Activated B cell treated with CpG ODN at 0.5 μM for 24 hours (primary cell): ENCODE measurements at regions of chr17 and their contacts with region 1.

Region 1: DNA sequence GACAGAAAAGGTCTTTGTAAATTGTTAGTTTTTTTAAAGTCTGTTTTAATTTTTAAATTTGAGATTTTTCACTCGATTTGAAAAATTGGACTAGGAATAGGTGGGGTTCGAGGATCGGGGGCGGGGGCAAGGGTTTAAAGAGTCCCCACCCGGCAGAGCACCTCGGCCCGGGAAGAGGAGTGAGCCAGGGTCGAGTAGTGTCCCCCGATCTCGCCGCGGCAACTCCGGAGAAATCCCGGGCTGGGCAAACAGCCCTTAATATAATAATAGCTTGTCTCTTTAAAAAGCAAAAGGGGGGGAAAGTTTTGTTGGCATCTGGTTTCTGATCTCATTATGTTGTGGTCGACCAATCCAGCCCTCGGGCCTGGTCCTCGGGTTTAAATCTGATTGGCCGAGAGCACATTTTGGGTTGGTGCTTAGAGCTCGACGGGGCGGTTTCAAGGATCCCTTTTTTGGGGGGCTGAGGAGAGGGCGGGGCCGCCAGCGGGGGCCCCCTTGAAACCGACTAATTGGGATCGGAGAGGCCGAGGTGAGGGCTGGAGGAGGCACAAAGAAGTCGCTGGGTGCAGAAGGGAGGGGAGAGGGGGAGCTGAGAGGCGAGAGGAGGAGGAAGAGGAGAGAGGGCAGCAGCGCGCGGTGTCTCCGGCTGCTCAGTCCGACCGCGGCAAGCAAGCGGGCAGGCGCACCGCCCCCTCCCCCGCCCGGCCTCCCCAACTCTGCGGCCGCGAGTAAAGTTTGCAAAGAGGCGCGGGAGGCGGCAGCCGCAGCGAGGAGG is at the start of gene FZD2:
- DNase-seq: peak; percentile 64
- ATAC-seq: peak; percentile 84
- H3K4me3 Mint-ChIP-seq: peak within 1 kb of the TSS; percentile 95
- H3K27ac Mint-ChIP-seq: peak within 1 kb of the TSS; percentile 90
- H3K4me1 Mint-ChIP-seq: peaks cover 26% of the 10 kb centered on the region
- H3K27me3 Mint-ChIP-seq: peaks cover 25% of the 10 kb centered on the region
- CTCF ChIP-seq: no peak
- total RNA-seq, gene FZD2: 0.91 TPM in 2 replicates

Region 2: GRCh38 chr17:44503147-44504029 is 53.6 kb before region 1 on chr17 and contains the start of gene GPATCH8:
- CTCF ChIA-PET with region 1: no interaction called
- POLR2A ChIA-PET with region 1: interaction called, 4 read pairs
- intact Hi-C with region 1: loop called (anchors 2 kb)
- DNase-seq: peak; percentile 96
- ATAC-seq: peak; percentile 90
- H3K4me3 Mint-ChIP-seq: peak within 1 kb of the TSS; percentile 98
- H3K27ac Mint-ChIP-seq: peak within 1 kb of the TSS; percentile 95
- H3K4me1 Mint-ChIP-seq: peaks cover 38% of the 10 kb centered on the region
- H3K27me3 Mint-ChIP-seq: peaks cover 7% of the 10 kb centered on the region
- CTCF ChIP-seq: no peak
- total RNA-seq, gene GPATCH8: 62.2 and 64.5 TPM in 2 replicates

Region 3: DNA sequence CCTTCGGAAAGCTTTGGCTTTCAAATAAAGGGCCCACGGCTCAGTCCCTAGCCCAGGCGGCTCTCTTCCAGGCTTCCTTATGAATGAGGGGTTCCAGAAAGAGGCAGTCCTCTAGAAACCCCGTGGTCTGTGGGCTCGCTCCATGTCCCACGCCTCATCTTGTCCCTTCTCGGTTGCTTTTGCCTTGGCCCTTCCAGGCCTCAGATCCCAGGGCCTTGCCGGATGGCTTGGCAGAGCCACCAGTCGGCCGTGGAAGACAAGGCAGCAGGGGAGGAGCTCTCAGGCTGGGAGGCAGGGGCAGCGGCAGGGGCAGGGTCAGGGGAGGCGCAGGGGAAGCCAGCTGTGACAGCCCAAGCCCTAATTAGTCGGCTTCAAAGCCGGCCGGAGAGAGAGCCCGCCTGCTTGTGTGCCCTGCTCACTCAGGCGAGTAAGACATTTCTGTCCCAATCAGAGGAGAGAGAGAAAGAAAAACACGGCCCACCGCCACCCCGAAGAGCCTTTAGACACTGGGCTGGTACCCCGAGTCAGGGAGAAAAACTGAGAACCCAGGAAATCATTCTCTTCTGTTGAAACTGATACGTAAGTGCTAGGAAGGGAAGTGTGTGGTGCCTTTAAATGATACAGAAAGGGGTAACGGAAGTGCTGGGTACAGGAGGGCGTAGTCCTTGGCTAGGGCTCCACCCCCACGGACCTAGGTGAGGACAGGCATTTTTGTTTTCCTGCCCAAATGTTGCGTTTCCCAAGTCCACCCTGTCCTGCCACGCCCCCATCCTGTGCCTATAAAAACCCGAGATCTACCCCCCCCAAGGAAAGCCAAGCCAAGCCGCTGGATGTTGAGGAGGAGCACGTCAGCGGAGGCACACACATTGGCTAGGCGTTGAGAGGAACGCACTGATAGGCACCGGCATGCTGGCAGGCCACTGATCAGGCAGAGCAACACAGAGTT is 71.5 kb after region 1 on chr17:
- CTCF ChIA-PET with region 1: no interaction called
- POLR2A ChIA-PET with region 1: no interaction called
- intact Hi-C with region 1: loop called (anchors 1 kb)
- DNase-seq: peak; percentile 53
- ATAC-seq: peak; percentile 96
- H3K4me3 Mint-ChIP-seq: peak overlapping the region; percentile 85
- H3K27ac Mint-ChIP-seq: peak overlapping the region; percentile 95
- H3K4me1 Mint-ChIP-seq: peaks cover 21% of the 10 kb centered on the region
- H3K27me3 Mint-ChIP-seq: peaks cover 3% of the 10 kb centered on the region
- CTCF ChIP-seq: no peak

Region 4: GRCh38 chr17:44655983-44656710 is 99.1 kb after region 1 on chr17 and contains the start of gene MEIOC:
- CTCF ChIA-PET with region 1: no interaction called
- POLR2A ChIA-PET with region 1: no interaction called
- intact Hi-C with region 1: loop called (anchors 1 kb)
- DNase-seq: peak; percentile 27
- ATAC-seq: peak; percentile 96
- H3K4me3 Mint-ChIP-seq: peak within 1 kb of the TSS; percentile 79
- H3K27ac Mint-ChIP-seq: no peak within 1 kb of the TSS
- H3K4me1 Mint-ChIP-seq: peaks cover 2% of the 10 kb centered on the region
- H3K27me3 Mint-ChIP-seq: peaks cover 19% of the 10 kb centered on the region
- CTCF ChIP-seq: no peak
- total RNA-seq, gene MEIOC: 0.24 and 0.91 TPM in 2 replicates

Region 5: DNA sequence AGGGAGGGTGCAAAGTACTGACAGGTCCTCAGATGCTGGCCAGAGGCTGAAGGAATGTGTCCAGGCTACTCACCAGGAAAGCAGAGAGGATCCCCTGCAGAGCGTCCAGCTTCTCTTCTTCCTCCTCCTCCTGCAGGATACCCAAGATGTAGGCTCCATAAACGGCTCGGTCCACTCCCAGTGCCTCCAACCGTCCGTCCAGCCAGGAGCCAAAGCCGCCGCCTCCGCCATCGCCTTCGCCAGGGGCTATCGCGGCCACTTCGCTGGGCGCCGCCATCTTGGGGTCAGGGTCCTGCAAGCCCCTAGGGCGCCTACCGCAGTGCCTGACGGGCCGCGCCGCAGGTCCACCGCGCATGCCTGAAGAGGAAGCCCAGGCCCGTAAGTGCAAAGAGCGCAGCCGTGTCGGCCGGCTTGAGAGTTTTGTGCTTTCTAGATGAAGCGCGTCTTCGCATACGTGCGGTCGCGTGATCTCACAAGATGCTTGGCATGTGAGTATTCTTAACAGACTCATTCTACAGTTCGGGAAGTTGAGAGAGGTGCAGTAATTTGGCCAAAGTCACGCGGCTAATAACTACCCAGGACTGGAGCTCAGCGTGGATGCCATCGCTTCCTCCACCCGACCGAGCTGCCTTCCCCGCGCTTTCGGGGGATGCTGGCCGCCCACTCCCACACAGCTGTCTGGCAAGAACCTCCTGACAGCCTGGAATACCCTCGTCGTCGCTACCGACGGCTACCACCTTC is 132.6 kb after region 1 on chr17 and contains the start of gene CCDC43:
- CTCF ChIA-PET with region 1: no interaction called
- POLR2A ChIA-PET with region 1: interaction called, 4 read pairs
- intact Hi-C with region 1: loop called (anchors 1 kb)
- DNase-seq: peak; percentile 90
- ATAC-seq: peak; percentile 100
- H3K4me3 Mint-ChIP-seq: peak within 1 kb of the TSS; percentile 98
- H3K27ac Mint-ChIP-seq: peak within 1 kb of the TSS; percentile 91
- H3K4me1 Mint-ChIP-seq: peaks cover 25% of the 10 kb centered on the region
- H3K27me3 Mint-ChIP-seq: no peaks in the 10 kb centered on the region
- CTCF ChIP-seq: no peak
- total RNA-seq, gene CCDC43: 20.1 and 22.4 TPM in 2 replicates

Region 6: GRCh38 chr17:44708401-44709181 is 151.6 kb after region 1 on chr17 and contains the start of gene DBF4B:
- CTCF ChIA-PET with region 1: no interaction called
- POLR2A ChIA-PET with region 1: no interaction called
- intact Hi-C with region 1: loop called (anchors 1 kb)
- DNase-seq: peak; percentile 65
- ATAC-seq: peak; percentile 96
- H3K4me3 Mint-ChIP-seq: no peak within 1 kb of the TSS
- H3K27ac Mint-ChIP-seq: no peak within 1 kb of the TSS
- H3K4me1 Mint-ChIP-seq: no peaks in the 10 kb centered on the region
- H3K27me3 Mint-ChIP-seq: peaks cover 10% of the 10 kb centered on the region
- CTCF ChIP-seq: no peak
- total RNA-seq, gene DBF4B: 10.3 and 13.8 TPM in 2 replicates